HCT116 (cell line): ENCODE measurements at regions of chr21 and their contacts with region 1.

Region 1: DNA sequence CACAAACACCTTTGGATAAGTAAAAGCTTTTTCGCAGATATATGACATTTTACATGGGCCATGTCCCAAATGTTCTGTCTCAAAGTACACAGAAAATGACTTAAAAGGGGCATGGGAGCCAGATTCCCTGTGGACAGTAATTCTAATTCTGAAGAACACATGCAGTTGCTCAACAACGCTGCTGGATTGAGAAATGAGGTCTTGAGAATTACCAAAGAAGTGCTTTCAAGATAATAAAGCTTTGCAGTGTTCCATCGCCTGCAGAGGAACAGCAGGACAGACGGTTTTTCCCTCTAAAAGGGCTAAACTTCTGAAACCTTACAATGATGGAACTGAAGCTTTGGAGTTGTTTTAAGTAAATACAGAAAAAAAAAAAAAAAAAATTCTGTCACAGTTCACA is 55.3 kb upstream of the HSPA13 start:
- DNase-seq: no peak
- ATAC-seq: no peak
- H3K4me3 ChIP-seq: no peak overlapping the region
- H3K27ac ChIP-seq: no peak overlapping the region
- H3K4me1 ChIP-seq: no peaks in the 10 kb centered on the region
- H3K27me3 ChIP-seq: no peaks in the 10 kb centered on the region
- CTCF ChIP-seq: no peak
- POLR2A ChIP-seq: no peak
- RAD21 ChIP-seq: no peak

Region 2: DNA sequence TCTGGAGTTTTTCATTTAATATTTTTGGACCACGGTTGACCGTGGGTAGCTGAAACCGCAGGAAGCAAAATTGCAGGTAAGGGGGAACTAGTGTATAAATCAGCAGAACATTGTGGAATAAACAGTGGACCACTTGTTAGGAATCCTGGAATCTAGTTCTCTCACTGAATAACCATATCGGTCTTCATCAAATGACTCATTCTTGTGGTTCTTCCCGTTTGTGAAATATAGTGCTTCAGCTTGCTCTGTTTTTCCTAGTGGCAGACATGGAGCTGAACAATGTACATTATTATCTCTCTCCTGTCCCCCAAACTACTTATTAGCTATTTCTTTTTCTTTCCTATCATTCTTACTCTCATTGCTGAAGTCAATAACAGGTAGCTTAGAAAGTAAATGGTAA is 117.2 kb before region 1 on chr21:
- CTCF ChIA-PET with region 1: no interaction called
- POLR2A ChIA-PET with region 1: no interaction called
- RAD21 ChIA-PET with region 1: no interaction called
- intact Hi-C with region 1: loop called (anchors 10 kb)
- DNase-seq: no peak
- ATAC-seq: no peak
- H3K4me3 ChIP-seq: no peak overlapping the region
- H3K27ac ChIP-seq: no peak overlapping the region
- H3K4me1 ChIP-seq: no peaks in the 10 kb centered on the region
- H3K27me3 ChIP-seq: no peaks in the 10 kb centered on the region
- CTCF ChIP-seq: no peak
- POLR2A ChIP-seq: no peak
- RAD21 ChIP-seq: no peak

Region 3: DNA sequence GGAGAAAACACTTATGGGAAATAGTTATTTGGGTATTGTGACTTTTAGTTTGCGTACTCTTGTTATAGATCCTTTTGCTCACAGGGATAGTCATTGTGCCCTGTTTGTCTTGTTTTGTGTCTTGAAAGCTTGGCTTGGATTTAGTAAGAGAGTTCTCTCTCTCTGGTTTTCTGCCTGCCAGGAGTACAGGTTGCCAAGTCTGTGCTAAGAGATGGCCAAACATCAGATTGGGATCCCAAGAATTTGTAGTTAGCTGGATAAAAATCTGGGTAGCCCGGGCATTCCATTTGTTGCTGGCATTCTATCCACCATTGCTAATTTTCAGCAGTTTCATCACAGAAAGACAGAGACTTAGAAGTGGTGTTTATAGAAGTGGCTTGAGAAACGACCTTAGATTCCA is 404.4 kb after region 1 on chr21:
- CTCF ChIA-PET with region 1: no interaction called
- POLR2A ChIA-PET with region 1: no interaction called
- RAD21 ChIA-PET with region 1: no interaction called
- intact Hi-C with region 1: loop called (anchors 10 kb)
- DNase-seq: no peak
- ATAC-seq: no peak
- H3K4me3 ChIP-seq: no peak overlapping the region
- H3K27ac ChIP-seq: no peak overlapping the region
- H3K4me1 ChIP-seq: no peaks in the 10 kb centered on the region
- H3K27me3 ChIP-seq: no peaks in the 10 kb centered on the region
- CTCF ChIP-seq: no peak
- POLR2A ChIP-seq: no peak
- RAD21 ChIP-seq: no peak